Cardiac septum (tissue), 1 donor: ENCODE measurements at regions of chr13 and their contacts with region 1.

Region 1: GRCh38 chr13:105798541-105798940 is 736.9 kb downstream of the EFNB2 start:
- DNase-seq: no peak

Region 2: DNA sequence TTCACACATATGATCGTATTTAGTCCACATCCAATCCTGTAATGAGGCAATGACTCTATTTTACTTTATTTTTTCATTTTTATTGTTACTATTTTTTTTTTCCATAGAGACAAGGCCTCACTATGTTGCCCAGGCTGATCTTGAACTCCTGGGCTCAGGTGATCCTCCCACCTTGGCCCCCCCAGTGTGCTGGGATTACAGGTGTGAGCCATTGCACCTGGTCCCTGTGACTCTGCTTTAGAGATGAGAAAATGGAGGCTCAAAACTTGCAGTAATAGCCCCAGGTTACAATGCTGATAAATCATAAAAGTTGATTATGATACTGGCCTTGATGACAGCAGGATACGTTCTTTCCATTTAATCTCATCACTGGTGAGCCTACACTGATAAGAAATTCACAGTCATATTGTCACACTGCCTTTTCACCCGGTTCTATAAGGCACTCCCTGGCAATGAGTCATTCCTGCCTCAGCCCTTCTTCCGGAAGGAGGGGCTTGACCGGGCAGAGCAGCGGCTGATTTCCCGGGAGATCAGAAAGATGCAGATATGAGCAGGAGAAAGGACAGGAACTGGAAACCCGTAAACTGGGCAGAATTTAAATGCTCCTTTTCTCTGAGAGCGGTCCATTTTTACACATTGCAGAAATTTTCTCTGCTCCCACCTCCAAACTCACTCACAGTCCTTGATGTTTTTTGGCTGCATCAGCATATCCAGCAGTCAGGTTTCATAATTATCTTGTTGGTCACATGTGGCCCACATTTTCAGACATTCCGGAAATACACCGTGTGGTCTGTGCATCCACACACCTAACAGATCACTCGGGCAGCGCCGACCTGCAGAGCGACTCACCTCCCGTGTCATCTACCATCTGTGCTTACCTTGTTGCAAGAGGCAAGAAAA is 120.6 kb after region 1 on chr13:
- intact Hi-C with region 1: loop called (anchors 10 kb)
- DNase-seq: no peak